GM13977 (cell line): ENCODE measurements at regions of chr13 and their contacts with region 1.

Region 1: DNA sequence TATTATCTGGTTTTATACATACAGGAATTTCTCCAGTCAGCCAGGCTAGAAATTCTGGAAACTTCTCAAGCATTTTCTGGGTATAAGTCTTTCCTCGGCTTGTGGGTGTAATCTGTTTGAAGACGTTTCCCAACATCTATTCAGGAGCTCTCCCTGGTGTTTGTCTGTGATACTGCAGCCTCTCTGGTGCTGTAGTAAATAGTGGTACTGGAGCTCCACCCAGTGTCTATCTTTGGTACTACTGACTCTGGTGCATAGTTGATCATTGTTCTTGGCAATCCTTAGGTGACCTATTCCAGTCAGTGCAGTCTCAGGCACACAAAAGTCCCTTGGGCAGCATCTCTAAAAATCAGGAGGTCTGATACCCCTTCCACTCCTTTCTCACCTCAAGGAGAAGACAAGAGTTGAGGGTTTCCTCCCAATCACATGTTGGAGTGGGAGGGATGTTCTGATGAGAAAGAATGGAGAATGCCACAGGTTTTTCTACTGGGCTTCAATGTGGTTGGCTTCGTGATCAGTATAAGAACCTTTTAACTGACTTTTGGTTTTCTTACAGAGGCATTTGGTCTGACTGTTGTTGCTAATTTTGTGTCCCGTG is 115.5 kb downstream of the CYSLTR2 start:
- DNase-seq: peak; percentile 63
- CTCF ChIP-seq: peak; percentile 97

Region 2: DNA sequence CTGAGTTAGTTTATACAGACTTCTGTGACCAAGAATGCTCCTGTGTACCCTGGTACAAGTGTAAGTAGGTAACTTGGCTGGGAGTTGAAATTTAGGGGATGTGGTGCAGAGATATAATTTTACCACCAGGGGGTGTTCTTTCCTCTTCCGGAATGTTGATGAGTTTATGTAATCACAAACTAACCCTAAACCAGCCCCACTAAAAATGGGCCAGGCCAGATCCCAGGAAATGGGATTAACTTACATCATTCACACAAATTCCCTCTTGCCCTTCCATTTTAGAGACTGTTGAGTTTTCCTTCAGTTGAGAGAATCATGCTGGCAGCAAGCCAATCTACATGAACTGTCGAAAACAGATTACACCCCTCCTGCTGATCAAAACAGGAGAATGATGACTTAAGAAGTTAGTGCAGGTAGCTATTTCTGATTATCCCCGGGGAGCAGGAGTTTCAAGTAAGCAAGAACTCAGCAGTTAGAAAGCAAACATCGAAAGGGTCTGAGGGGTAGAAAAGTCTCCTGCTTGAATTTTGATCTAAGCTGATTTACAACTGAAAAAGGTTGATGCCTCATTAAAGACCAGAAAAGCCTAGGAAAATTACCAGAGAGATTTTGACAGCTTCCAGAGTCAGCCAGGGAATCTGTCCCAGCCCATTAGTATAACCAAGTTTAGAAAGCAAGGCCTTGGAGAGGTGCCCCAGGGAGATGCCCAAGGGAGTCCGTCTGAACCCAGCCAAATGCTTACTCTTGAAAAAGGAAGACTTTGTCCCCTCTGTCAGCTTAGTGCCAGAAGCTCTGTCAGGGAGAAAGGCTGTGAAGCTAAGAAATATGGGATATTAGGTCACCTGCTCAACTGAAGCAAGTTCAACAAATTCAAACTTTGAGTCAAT is 642.0 kb before region 1 on chr13:
- in situ Hi-C with region 1: loop called (anchors 25 kb)
- DNase-seq: peak; percentile 59
- CTCF ChIP-seq: peak; percentile 58

Region 3: DNA sequence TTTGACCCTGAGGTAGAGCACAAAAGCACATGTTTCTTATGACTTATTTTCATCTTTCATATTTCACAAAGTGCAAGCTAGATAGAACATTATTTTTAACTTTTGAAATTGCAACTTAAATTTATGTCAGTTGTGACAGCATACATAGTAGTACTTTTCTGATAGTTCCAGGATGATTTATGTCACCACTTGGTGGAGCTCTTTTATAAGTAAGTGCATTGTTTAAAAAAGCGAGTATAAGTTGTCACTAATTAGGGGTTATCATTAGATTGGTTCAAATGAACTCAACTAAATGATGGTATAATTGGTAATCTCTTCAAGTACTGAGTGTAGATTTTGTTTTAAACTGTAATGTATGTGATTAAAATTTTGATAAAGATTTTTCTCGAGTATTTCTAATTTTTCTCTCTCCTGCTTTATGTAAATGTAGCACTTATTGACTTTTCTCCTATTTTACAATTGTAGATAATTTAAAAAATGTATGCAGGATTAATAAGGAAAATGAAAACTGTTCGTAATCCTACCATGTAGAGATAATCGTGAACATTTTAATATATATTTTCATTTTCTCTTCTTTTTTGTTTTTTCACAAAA is 434.6 kb before region 1 on chr13:
- in situ Hi-C with region 1: loop called (anchors 25 kb)
- DNase-seq: peak; percentile 30
- CTCF ChIP-seq: peak; percentile 58